ENCODE measurements at regions of chr16 and their contacts with region 1.

Region 1: GRCh38 chr16:24504472-24505345 is 34.7 kb upstream of the RBBP6 start:
- DNase-seq: peak; percentile 67
- H3K4me3 Mint-ChIP-seq: no peak overlapping the region
- H3K27ac Mint-ChIP-seq: no peak overlapping the region
- H3K4me1 Mint-ChIP-seq: no peaks in the 10 kb centered on the region
- H3K27me3 Mint-ChIP-seq: peaks cover 6% of the 10 kb centered on the region

Region 2: DNA sequence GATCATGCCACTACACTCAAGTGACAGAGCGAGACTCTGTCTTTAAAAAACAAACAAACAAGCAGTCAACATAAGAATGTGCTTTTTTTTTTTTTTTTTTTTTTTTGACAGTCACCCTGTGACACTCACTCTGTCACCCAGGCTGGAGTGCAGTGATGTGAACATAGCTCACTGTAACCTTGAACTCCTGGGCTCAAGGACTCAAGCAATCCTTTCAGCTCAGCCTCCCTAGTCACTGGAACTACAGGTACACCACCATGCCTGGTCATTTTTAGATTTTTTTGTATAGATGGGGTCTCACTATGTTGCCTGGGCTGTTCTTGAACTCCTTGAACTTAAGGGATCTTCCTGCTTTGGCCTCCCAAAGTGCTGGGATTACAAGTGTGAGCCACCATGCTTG is 765.2 kb before region 1 on chr16:
- CTCF ChIA-PET with region 1: no interaction called
- POLR2A ChIA-PET with region 1: no interaction called
- intact Hi-C with region 1: loop called (anchors 5 kb)
- DNase-seq: no peak
- H3K4me3 Mint-ChIP-seq: no peak overlapping the region
- H3K27ac Mint-ChIP-seq: no peak overlapping the region
- H3K4me1 Mint-ChIP-seq: peaks cover 4% of the 10 kb centered on the region
- H3K27me3 Mint-ChIP-seq: peaks cover 8% of the 10 kb centered on the region

Region 3: GRCh38 chr16:24036614-24037013 is 468.1 kb before region 1 on chr16:
- CTCF ChIA-PET with region 1: interaction called, 56 read pairs
- POLR2A ChIA-PET with region 1: interaction called, 3 read pairs
- intact Hi-C with region 1: no loop called
- DNase-seq: peak; percentile 36
- H3K4me3 Mint-ChIP-seq: no peak overlapping the region
- H3K27ac Mint-ChIP-seq: no peak overlapping the region
- H3K4me1 Mint-ChIP-seq: peaks cover 30% of the 10 kb centered on the region
- H3K27me3 Mint-ChIP-seq: no peaks in the 10 kb centered on the region

Region 4: DNA sequence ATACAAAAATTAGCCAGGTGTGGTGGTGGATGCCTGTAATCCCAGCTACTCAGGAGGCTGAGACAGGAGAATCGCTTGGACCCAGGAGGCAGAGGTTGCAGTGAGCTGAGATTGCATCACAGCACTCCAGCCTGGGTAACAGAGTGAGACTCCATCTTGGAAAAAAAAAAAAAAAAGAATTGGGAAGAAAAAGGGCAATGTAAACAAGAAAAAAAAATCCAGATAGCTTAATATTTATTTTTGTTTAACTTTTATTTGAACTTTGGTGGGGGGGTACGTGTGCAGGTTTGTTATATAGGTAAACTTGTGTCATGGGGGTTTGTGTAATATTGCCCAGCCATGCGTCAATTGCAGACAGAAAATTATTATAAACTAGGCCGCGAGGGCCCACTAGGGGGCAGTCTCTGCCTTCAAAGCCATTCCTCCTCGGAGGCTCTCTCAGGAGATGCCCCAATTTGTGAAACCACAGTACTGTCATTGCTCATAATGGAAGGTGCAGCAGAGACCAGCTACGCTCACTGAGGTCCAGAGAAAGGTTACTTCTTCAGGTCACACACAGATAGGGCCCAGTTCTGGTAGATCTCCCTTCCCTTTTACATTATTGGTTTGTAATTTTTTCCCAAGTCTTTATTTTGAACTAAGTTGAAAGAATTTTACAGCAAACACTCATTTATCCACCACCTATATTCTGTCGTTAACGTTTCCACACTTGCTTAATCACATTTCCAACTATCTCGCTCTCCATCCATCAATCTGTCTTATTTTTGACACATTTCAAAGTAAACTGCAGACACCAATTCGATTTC is 462.7 kb before region 1 on chr16:
- CTCF ChIA-PET with region 1: interaction called, 56 read pairs
- POLR2A ChIA-PET with region 1: interaction called, 3 read pairs
- intact Hi-C with region 1: loop called (anchors 1 kb)
- DNase-seq: peak; percentile 90
- H3K4me3 Mint-ChIP-seq: no peak overlapping the region
- H3K27ac Mint-ChIP-seq: no peak overlapping the region
- H3K4me1 Mint-ChIP-seq: peaks cover 8% of the 10 kb centered on the region
- H3K27me3 Mint-ChIP-seq: no peaks in the 10 kb centered on the region

Region 5: DNA sequence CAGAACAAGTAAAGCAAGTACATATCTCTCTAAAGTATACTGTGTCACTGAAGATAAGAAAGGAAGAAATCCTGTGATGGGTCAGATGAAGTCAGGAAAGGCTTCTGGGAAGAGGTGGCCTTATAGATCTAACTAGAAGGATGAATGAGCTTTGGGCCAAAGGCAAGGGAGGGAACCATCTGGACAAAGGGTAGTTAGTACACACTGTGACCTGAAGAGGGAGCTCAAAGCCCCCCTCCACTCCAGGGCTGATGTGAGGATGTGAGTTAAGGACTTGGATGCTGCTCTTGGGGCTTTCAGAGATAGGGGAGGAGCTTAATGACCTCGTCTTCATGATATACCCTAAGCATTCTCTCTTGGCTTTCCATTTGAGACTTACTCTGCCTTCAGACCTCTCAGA is 433.9 kb before region 1 on chr16:
- CTCF ChIA-PET with region 1: interaction called, 50 read pairs
- POLR2A ChIA-PET with region 1: no interaction called
- intact Hi-C with region 1: no loop called
- DNase-seq: peak; percentile 66
- H3K4me3 Mint-ChIP-seq: no peak overlapping the region
- H3K27ac Mint-ChIP-seq: no peak overlapping the region
- H3K4me1 Mint-ChIP-seq: peaks cover 39% of the 10 kb centered on the region
- H3K27me3 Mint-ChIP-seq: no peaks in the 10 kb centered on the region

Region 6: GRCh38 chr16:24382762-24383407 is 121.8 kb before region 1 on chr16:
- CTCF ChIA-PET with region 1: no interaction called
- POLR2A ChIA-PET with region 1: no interaction called
- intact Hi-C with region 1: no loop called
- DNase-seq: no peak
- H3K4me3 Mint-ChIP-seq: no peak overlapping the region
- H3K27ac Mint-ChIP-seq: no peak overlapping the region
- H3K4me1 Mint-ChIP-seq: no peaks in the 10 kb centered on the region
- H3K27me3 Mint-ChIP-seq: peaks cover 14% of the 10 kb centered on the region

Region 7: DNA sequence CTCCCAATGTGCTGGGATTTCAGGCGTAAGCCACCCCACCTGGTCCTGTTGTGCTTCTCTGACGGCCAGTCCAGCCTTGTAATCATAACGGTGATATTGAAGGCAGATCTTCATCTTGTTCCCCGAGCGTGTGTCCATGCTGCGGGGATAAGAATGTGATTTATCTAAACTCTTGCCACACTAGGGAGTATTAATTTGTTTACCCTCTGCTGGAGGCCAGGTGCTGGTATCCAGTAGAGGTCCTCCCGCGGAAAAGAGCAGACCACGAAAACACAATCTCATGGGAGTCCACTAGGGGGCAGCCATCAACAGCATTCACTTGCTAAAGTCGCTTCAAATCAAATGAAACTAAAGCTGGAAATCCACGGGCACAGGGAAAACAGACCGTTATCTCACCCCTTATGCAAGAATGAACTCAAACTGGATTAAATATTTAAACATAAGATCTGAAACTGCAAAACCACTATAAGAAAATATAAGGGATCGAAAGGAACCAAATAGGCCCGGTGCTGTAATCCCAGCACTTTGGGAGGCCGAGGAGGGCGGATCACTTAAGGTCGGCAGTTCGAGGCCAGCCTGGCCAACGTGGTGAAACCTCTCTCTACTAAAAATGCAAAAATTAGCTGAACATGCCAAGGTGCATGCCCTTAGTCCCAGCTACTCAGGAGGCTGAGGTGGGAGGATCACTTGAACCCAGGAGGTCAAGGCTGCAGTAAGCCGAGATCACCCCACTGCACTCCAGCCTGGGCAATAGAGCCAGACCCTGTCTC is 12.4 kb after region 1 on chr16:
- CTCF ChIA-PET with region 1: interaction called, 34 read pairs
- POLR2A ChIA-PET with region 1: interaction called, 4 read pairs
- intact Hi-C with region 1: no loop called
- DNase-seq: peak; percentile 86
- H3K4me3 Mint-ChIP-seq: no peak overlapping the region
- H3K27ac Mint-ChIP-seq: no peak overlapping the region
- H3K4me1 Mint-ChIP-seq: peaks cover 5% of the 10 kb centered on the region
- H3K27me3 Mint-ChIP-seq: peaks cover 3% of the 10 kb centered on the region

Region 8: GRCh38 chr16:24598777-24599437 is 94.2 kb after region 1 on chr16:
- CTCF ChIA-PET with region 1: no interaction called
- POLR2A ChIA-PET with region 1: no interaction called
- intact Hi-C with region 1: no loop called
- DNase-seq: no peak
- H3K4me3 Mint-ChIP-seq: no peak overlapping the region
- H3K27ac Mint-ChIP-seq: no peak overlapping the region
- H3K4me1 Mint-ChIP-seq: no peaks in the 10 kb centered on the region
- H3K27me3 Mint-ChIP-seq: peaks cover 17% of the 10 kb centered on the region

Measured in activated CD4-positive, alpha-beta memory T cell treated with anti-CD3 and anti-CD28 coated beads for 36 hours (primary cell).